ENCODE measurements at regions of chr6 and their contacts with region 1.

Region 1: DNA sequence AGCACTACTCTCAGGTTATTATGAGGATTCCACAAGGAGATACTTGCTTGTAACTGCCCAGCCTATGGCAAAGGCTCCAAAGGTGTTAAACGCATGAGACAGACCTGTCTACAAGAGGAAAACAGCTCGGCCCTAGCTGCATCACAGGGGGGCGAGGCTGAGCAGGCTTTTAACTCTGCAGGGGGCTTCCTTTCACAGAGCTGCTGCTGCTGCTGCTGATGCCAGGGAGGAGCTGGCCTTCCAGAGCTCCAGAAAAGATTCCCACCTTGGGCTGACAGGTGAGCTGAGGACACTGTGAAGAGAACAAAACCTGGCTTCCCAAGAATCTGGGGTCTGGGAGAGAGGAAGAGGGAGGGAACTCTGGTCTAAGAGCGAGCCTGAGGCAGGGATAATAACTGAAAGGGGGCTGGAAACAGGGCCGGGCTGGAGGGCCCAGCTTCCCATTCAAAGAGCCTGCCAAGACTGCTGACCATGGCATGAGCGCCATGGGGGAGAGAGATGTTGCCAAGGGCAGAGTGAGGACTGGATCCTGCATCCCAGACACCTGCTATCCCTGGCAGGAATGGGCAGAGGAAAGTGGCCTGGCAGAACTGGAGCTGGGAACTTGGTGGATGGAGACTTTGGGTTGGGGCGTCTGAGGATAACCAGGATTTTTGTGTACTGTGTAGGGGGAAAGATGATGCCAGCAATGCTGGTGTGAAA is 211.1 kb upstream of the LRFN2 start:
- DNase-seq: peak; percentile 54
- ATAC-seq: peak; percentile 80
- H3K4me3 Mint-ChIP-seq: no peak overlapping the region
- H3K27ac Mint-ChIP-seq: no peak overlapping the region
- H3K4me1 Mint-ChIP-seq: peaks cover 29% of the 10 kb centered on the region
- H3K27me3 Mint-ChIP-seq: peaks cover 7% of the 10 kb centered on the region
- CTCF ChIP-seq: no peak

Region 2: GRCh38 chr6:40648944-40649343 is 149.3 kb before region 1 on chr6:
- CTCF ChIA-PET with region 1: no interaction called
- POLR2A ChIA-PET with region 1: no interaction called
- DNase-seq: no peak
- ATAC-seq: no peak
- H3K4me3 Mint-ChIP-seq: no peak overlapping the region
- H3K27ac Mint-ChIP-seq: no peak overlapping the region
- H3K4me1 Mint-ChIP-seq: peaks cover 22% of the 10 kb centered on the region
- H3K27me3 Mint-ChIP-seq: no peaks in the 10 kb centered on the region
- CTCF ChIP-seq: no peak

Region 3: DNA sequence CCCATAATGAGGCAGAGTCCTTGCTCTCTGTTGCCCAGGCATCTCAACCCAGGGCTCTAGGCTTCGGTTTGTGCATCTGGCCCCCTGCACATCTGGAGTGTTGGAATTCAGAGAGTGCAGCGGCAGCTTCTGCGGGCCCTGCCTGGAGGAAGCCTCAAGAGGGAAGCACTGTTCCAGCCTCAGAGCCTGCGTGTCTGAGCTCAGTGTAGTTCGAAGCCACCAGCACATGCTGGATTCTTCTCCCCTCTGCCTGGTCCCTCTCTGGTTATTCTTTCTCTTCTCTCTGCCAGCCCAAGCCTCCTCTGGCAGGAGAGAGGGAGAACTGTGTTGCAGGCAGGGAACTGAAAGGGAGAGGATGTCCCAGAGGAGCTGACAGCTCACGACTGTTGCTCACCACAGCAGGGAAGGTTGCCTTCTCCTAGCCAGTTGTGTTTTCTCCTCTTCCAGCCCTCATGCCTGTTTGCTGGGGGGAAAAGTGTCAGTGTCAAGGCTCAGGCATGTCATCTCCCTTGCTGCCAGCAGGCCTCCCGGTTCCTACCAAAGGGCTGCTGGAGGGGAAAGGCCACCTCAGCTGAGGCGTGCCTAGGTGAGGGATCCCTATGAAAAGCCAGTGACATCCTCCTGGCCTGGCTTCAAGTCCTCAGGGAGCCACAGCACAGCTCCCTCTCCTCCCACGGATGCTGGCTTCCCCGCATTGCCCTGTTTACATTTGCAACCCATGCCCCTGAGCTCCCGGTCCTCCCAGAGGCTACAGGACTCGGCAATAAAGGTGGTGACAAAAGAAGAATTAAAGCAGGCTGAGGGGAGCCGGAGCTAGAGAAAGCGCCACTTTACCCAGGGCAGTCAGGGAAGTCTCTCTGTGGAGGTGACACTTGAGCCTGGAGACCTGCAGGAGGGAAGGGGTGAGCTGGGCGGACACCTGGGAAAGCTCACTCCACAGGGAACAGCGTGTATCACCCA is 84.9 kb before region 1 on chr6:
- CTCF ChIA-PET with region 1: interaction called, 12 read pairs
- POLR2A ChIA-PET with region 1: no interaction called
- DNase-seq: peak; percentile 27
- ATAC-seq: peak; percentile 86
- H3K4me3 Mint-ChIP-seq: no peak overlapping the region
- H3K27ac Mint-ChIP-seq: no peak overlapping the region
- H3K4me1 Mint-ChIP-seq: peaks cover 5% of the 10 kb centered on the region
- H3K27me3 Mint-ChIP-seq: no peaks in the 10 kb centered on the region; the same call in none of the 2 replicates
- CTCF ChIP-seq: no peak

Region 4: GRCh38 chr6:40894962-40895799 is 97.0 kb after region 1 on chr6:
- CTCF ChIA-PET with region 1: no interaction called
- POLR2A ChIA-PET with region 1: no interaction called
- DNase-seq: peak; percentile 82
- ATAC-seq: peak; percentile 99
- H3K4me3 Mint-ChIP-seq: no peak overlapping the region
- H3K27ac Mint-ChIP-seq: no peak overlapping the region
- H3K4me1 Mint-ChIP-seq: peaks cover 12% of the 10 kb centered on the region
- H3K27me3 Mint-ChIP-seq: peaks cover 47% of the 10 kb centered on the region
- CTCF ChIP-seq: peak; percentile 30; the same call in 1 of the 2 replicates

Measured in WTC11 (cell line).